ENCODE measurements at regions of chr13 and their contacts with region 1.

Region 1: GRCh38 chr13:20197361-20197834 is 4.7 kb upstream of the GJB2 start:
- DNase-seq: no peak
- ATAC-seq: no peak
- H3K4me3 Mint-ChIP-seq: no peak overlapping the region
- H3K27ac Mint-ChIP-seq: no peak overlapping the region
- H3K4me1 Mint-ChIP-seq: peaks cover 12% of the 10 kb centered on the region
- H3K27me3 Mint-ChIP-seq: peaks cover 54% of the 10 kb centered on the region
- CTCF ChIP-seq: no peak

Region 2: GRCh38 chr13:20065516-20065915 is 131.9 kb before region 1 on chr13:
- CTCF ChIA-PET with region 1: no interaction called
- POLR2A ChIA-PET with region 1: no interaction called
- DNase-seq: no peak
- ATAC-seq: no peak
- H3K4me3 Mint-ChIP-seq: no peak overlapping the region
- H3K27ac Mint-ChIP-seq: no peak overlapping the region
- H3K4me1 Mint-ChIP-seq: no peaks in the 10 kb centered on the region
- H3K27me3 Mint-ChIP-seq: no peaks in the 10 kb centered on the region
- CTCF ChIP-seq: no peak

Region 3: GRCh38 chr13:20106742-20107141 is 90.7 kb before region 1 on chr13:
- CTCF ChIA-PET with region 1: no interaction called
- POLR2A ChIA-PET with region 1: no interaction called
- DNase-seq: no peak
- ATAC-seq: no peak
- H3K4me3 Mint-ChIP-seq: peak overlapping the region; percentile 9
- H3K27ac Mint-ChIP-seq: no peak overlapping the region
- H3K4me1 Mint-ChIP-seq: peaks cover 18% of the 10 kb centered on the region
- H3K27me3 Mint-ChIP-seq: peaks cover 4% of the 10 kb centered on the region; the same call in 1 of the 2 replicates
- CTCF ChIP-seq: no peak

Region 4: GRCh38 chr13:20182231-20182846 is 15.1 kb before region 1 on chr13:
- CTCF ChIA-PET with region 1: interaction called, 19 read pairs
- POLR2A ChIA-PET with region 1: no interaction called
- DNase-seq: peak; percentile 46
- ATAC-seq: peak; percentile 98
- H3K4me3 Mint-ChIP-seq: no peak overlapping the region
- H3K27ac Mint-ChIP-seq: no peak overlapping the region
- H3K4me1 Mint-ChIP-seq: no peaks in the 10 kb centered on the region
- H3K27me3 Mint-ChIP-seq: no peaks in the 10 kb centered on the region
- CTCF ChIP-seq: peak; percentile 72

Region 5: GRCh38 chr13:20231839-20232555 is 34.6 kb after region 1 on chr13 and contains the start of gene GJB6:
- CTCF ChIA-PET with region 1: interaction called, 10 read pairs
- POLR2A ChIA-PET with region 1: interaction called, 10 read pairs
- DNase-seq: peak; percentile 68
- ATAC-seq: peak; percentile 71
- H3K4me3 Mint-ChIP-seq: peak within 1 kb of the TSS; percentile 72
- H3K27ac Mint-ChIP-seq: no peak within 1 kb of the TSS
- H3K4me1 Mint-ChIP-seq: peaks cover 9% of the 10 kb centered on the region
- H3K27me3 Mint-ChIP-seq: peaks cover 82% of the 10 kb centered on the region
- CTCF ChIP-seq: no peak
- total RNA-seq, gene GJB6: not detected in 3 replicates

Region 6: DNA sequence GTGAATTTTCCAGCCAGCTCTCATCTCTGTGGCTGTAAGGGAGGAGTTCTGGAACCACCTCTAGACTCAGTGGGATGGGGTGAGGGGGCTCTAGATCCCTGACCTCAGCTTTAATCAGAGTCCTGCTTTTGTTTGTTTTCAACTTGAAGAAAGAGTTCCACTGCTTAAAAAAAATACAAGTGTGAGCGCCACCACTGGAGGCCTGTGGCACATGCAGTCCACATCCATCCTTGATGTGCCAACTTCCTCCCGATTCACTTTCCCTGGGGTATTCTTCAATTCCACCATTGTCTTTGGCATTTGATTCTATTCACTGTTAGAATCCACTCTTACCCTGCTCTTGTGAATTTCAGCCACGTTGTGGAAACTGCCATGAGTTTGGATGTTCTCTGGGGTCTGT is 97.1 kb after region 1 on chr13:
- CTCF ChIA-PET with region 1: interaction called, 35 read pairs
- POLR2A ChIA-PET with region 1: no interaction called
- DNase-seq: peak; percentile 43
- ATAC-seq: peak; percentile 64
- H3K4me3 Mint-ChIP-seq: no peak overlapping the region
- H3K27ac Mint-ChIP-seq: no peak overlapping the region
- H3K4me1 Mint-ChIP-seq: peaks cover 7% of the 10 kb centered on the region
- H3K27me3 Mint-ChIP-seq: no peaks in the 10 kb centered on the region; the same call in 1 of the 2 replicates
- CTCF ChIP-seq: peak; percentile 47